ENCODE measurements at regions of chr5 and their contacts with region 1.

Region 1: GRCh38 chr5:78899922-78900362 is 85.2 kb downstream of the ARSB start:
- DNase-seq: no peak

Region 2: DNA sequence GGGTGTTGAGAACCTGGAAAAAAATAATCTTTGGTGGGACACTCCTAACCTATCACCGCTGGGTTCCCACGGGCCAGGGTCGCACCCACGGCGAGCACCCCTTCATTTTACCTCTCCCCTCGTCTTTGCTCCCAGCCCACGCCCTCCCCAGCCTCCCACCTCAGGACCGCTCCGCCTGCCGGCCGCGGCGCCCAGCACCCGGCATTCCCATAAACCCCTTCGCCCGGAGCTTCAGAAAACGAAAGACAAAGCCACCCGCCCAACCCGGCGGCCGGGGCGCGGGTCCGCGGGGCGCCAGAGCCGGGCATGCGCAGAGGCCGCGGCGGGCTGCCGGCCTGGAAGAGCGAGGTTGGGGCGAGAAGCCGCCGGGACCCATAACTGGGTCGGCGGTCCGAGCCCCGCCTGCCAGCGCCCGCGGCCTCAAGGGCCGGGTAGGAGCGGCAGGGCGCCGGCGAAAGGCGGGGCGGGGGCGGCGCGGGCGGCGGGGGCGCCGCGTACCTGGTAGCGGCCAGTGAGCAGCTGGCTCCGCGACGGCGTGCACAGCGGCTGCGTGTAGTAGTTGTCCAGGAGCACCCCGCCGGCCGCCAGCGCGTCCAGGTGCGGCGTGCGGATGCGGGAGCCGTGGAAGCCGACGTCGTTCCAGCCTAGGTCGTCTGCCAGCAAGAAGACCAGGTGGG is 84.6 kb after region 1 on chr5:
- intact Hi-C with region 1: loop called (anchors 5 kb)
- DNase-seq: peak; percentile 92

Region 3: DNA sequence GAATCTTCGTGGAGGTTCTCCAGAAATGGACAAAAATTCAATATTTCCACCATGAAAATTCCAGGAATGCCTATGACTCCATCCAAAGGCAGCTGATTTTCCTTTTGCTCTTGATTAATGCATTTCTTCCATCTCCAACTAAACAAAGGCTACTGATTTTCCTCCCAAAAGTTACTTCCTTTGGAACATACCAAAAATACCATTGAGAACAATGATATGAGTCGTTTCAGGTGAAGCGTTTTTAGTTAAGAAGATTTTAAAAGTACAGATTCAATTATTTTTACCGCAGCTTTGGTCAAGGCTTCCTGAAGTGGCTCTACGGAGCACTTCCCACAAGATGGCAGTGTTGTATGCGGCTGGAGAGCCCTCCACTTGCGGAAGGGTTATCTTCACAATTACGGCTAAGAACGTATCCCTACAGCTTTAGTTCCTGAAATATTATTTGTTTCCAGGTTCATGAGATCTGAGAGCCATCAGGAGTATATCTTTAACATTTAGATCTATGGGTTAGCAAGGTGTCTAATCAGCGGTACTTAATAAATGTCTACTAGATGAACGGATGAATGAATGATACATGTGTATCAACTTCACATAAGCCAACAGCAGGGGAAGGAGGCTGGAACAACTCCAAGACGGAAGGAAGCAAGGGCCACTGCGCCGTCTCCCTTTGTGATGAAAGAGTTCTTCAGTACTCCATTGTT is 121.1 kb after region 1 on chr5:
- intact Hi-C with region 1: no loop called
- DNase-seq: no peak

Measured in cardiac septum (tissue), 1 donor.